Activated T-helper 1 cell treated with anti-CD3 and anti-CD28 coated beads, Interleukin-12 subunit alpha, Interleukin-12 subunit beta, Interleukin-2, Interleukin-4 antibody, amounts not matched to agents 30 ng/mL and 10 ng/mL and 1 ng/mL, durations not matched to agents 14 hours and 24 hours and 36 hours (primary cell): ENCODE measurements at regions of chr3 and their contacts with region 1.

Region 1: GRCh38 chr3:17412950-17413530 is 329.4 kb downstream of the TBC1D5 start:
- DNase-seq: peak; percentile 16
- H3K4me3 Mint-ChIP-seq: no peak overlapping the region
- H3K27ac Mint-ChIP-seq: no peak overlapping the region
- H3K4me1 Mint-ChIP-seq: no peaks in the 10 kb centered on the region
- H3K27me3 Mint-ChIP-seq: no peaks in the 10 kb centered on the region

Region 2: GRCh38 chr3:17158941-17159682 is 253.9 kb before region 1 on chr3:
- intact Hi-C with region 1: no loop called
- DNase-seq: no peak
- H3K4me3 Mint-ChIP-seq: no peak overlapping the region
- H3K27ac Mint-ChIP-seq: no peak overlapping the region
- H3K4me1 Mint-ChIP-seq: peaks cover 14% of the 10 kb centered on the region
- H3K27me3 Mint-ChIP-seq: no peaks in the 10 kb centered on the region

Region 3: GRCh38 chr3:17258823-17259436 is 154.1 kb before region 1 on chr3:
- intact Hi-C with region 1: loop called (anchors 1 kb)
- DNase-seq: no peak
- H3K4me3 Mint-ChIP-seq: no peak overlapping the region
- H3K27ac Mint-ChIP-seq: no peak overlapping the region
- H3K4me1 Mint-ChIP-seq: no peaks in the 10 kb centered on the region
- H3K27me3 Mint-ChIP-seq: peaks cover 3% of the 10 kb centered on the region

Region 4: DNA sequence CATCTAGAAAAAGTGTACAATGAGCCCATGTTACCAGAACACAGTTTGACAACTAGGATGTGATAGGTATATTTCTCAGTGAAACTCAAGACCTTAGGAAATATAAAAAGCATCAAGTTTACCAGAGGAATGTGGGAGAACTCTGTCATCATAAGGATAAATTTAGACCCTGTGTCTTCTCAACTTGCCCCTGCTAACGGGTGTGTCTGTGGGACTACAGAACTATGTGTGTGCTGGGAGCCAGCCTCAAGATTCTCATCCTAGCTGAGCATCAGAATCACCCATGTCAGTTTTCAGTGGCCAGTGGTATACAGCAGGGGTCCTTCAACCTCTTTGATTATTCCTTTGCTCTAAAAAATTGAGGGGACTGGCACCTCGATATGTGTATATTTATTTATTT is 135.0 kb before region 1 on chr3:
- intact Hi-C with region 1: no loop called
- DNase-seq: no peak
- H3K4me3 Mint-ChIP-seq: no peak overlapping the region
- H3K27ac Mint-ChIP-seq: no peak overlapping the region
- H3K4me1 Mint-ChIP-seq: no peaks in the 10 kb centered on the region
- H3K27me3 Mint-ChIP-seq: peaks cover 2% of the 10 kb centered on the region